ENCODE measurements at regions of chr5 and their contacts with region 1.

Region 1: GRCh38 chr5:373710-374602 is 52.4 kb downstream of the AHRR start:
- DNase-seq: no peak
- ATAC-seq: peak; percentile 50
- H3K4me3 ChIP-seq: peak overlapping the region; percentile 65
- H3K27ac ChIP-seq: peak overlapping the region; percentile 98
- H3K4me1 ChIP-seq: peaks cover 80% of the 10 kb centered on the region
- H3K27me3 ChIP-seq: no peaks in the 10 kb centered on the region
- CTCF ChIP-seq: no peak
- EP300 ChIP-seq: peak; percentile 89 to 97
- POLR2A ChIP-seq: peak; percentile 79
- RAD21 ChIP-seq: peak; percentile 25; the same call in 1 of the 2 replicates

Region 2: DNA sequence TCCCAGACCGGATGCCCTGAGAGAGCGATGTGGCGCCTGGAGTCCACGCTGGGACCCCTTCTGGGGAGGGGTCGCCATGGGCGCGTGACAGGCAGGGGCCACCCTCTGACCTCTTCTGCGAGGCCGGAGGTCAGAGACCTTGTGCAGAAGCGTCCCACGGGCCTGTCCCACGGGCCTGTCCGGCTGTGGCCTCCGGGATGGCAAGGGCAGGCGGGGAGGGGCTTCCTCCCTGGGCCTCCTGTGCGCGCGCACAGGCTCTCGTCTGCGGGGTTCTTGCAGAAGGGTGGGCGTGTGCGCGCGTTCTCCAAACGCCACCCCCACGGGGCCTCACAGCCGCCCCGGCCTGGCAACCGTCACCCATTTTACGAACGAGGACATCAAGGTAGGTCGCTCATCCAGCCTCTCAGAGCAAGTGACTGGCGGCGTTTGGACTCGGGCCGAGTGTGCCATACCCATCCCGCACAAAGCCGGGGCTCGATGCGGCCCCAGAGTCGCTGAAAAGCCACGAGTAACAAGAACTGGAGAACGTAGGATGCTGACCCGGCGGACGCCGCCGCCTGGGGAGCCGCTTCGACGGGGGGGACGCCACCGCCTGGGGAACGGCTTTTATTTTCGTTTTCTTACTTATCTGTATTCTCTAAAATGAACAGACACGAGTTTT is 51.5 kb before region 1 on chr5:
- CTCF ChIA-PET with region 1: interaction called, 7 read pairs
- POLR2A ChIA-PET with region 1: interaction called, 3 read pairs
- RAD21 ChIA-PET with region 1: interaction called, 7 read pairs
- SMC1A ChIA-PET with region 1: interaction called, 3 read pairs
- in situ Hi-C with region 1: no loop called
- intact Hi-C with region 1: loop called (anchors 2 kb)
- DNase-seq: no peak
- ATAC-seq: peak; percentile 63
- H3K4me3 ChIP-seq: peak overlapping the region; percentile 96
- H3K27ac ChIP-seq: peak overlapping the region; percentile 81
- H3K4me1 ChIP-seq: peaks cover 16% of the 10 kb centered on the region
- H3K27me3 ChIP-seq: no peaks in the 10 kb centered on the region
- CTCF ChIP-seq: no peak
- EP300 ChIP-seq: no peak
- POLR2A ChIP-seq: peak; percentile 43; the same call in 1 of the 2 replicates
- RAD21 ChIP-seq: no peak

Region 3: DNA sequence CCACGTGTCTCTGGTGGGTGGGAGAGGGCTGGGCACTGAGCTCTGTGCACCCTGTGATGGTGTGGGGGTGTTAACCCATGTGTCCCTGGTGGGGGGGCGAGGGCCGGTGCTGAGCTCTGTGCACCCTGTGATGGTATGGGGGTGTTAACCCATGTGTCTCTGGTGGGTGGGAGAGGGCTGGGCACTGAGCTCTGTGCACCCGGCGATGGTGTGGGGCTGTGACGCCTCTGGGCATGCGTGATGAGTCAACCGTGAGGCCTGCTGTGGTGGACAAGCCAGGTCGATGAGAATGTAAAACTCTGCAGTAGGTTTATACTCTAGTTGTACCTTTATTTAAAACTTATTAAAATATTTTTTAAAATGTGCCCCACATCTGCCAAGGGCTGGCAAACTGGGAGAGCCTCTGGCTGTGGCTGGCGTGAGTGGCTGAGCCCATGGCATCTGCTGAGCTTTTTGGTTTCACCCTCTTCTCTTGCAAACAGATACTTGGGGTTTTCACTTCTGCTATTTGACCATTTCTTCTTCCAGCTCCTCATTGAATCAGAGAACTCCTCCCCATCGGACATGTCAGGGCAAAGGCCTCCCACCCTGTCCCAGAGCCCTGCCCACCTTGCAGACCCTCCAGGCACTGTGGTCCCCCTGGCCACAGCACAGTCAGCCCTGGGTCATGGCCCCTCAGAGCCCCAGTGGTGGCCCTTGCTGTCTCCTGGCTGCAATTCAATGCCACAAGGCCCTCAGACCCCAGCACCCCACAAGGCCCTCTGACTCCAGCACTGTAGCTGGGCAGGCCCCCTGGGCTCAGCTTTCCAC is 50.5 kb after region 1 on chr5:
- CTCF ChIA-PET with region 1: interaction called, 15 read pairs
- POLR2A ChIA-PET with region 1: interaction called, 9 read pairs
- RAD21 ChIA-PET with region 1: interaction called, 13 read pairs
- SMC1A ChIA-PET with region 1: interaction called, 7 read pairs
- in situ Hi-C with region 1: no loop called
- intact Hi-C with region 1: loop called (anchors 2 kb)
- DNase-seq: peak; percentile 82
- ATAC-seq: peak; percentile 93
- H3K4me3 ChIP-seq: no peak overlapping the region
- H3K27ac ChIP-seq: peak overlapping the region; percentile 99
- H3K4me1 ChIP-seq: peaks cover 22% of the 10 kb centered on the region
- H3K27me3 ChIP-seq: no peaks in the 10 kb centered on the region
- CTCF ChIP-seq: no peak
- EP300 ChIP-seq: peak; percentile 51 to 64; a peak in 2 of 4 replicates
- POLR2A ChIP-seq: peak; percentile 63; the same call in 1 of the 2 replicates
- RAD21 ChIP-seq: no peak